Activated B cell treated with CpG ODN at 0.5 μM for 24 hours (primary cell): ENCODE measurements at regions of chr11 and their contacts with region 1.

Region 1: DNA sequence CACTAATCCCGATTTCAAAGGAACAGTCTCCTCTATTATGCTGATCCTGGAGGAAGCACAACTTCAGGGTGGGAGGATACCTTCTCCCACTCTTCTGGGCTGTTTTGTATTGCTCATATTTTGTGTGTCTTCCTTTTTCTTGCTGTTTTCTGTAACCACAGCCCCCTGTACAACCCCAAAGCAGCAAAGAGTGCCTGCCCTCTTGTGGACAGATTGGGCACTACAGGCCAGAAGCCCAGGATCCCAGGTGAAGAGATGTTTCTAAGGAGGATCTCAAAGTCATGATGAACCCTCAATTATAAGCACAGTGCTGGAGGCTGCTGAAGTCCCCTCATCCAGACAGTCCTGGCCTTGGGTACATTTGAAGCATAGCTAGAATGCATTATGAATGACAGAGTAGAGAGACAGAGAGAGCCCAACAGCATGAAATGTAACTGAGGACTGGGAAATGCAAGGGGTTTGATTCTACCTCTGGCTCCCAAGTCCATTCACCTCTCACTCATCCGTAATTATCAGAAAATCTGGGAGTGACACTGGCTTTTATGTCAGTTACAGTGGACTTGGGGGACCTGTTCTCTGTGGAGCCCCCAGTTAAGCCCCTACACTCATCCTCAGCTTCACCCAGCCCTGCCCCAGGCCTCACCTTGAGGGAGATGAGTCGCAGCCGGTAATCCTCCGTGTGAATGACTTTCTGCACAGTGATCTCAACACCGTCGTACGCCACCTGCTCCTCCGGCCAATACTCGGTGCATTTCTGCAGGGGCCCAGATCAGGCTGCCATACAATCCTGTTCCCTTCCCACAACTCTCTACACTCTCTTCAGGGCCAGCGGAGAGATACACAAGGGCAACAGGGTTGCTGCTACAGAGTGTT is 6.2 kb upstream of the IGSF22 start:
- DNase-seq: peak; percentile 56
- ATAC-seq: peak; percentile 82
- H3K4me3 Mint-ChIP-seq: no peak overlapping the region
- H3K27ac Mint-ChIP-seq: peak overlapping the region; percentile 10
- H3K4me1 Mint-ChIP-seq: peaks cover 15% of the 10 kb centered on the region
- H3K27me3 Mint-ChIP-seq: peaks cover 2% of the 10 kb centered on the region
- CTCF ChIP-seq: peak; percentile 71

Region 2: GRCh38 chr11:18115360-18116127 is 616.6 kb before region 1 on chr11:
- CTCF ChIA-PET with region 1: interaction called, 34 read pairs
- POLR2A ChIA-PET with region 1: no interaction called
- intact Hi-C with region 1: loop called (anchors 1 kb)
- DNase-seq: peak; percentile 36
- ATAC-seq: peak; percentile 93
- H3K4me3 Mint-ChIP-seq: no peak overlapping the region
- H3K27ac Mint-ChIP-seq: no peak overlapping the region
- H3K4me1 Mint-ChIP-seq: peaks cover 4% of the 10 kb centered on the region
- H3K27me3 Mint-ChIP-seq: peaks cover 14% of the 10 kb centered on the region
- CTCF ChIP-seq: peak; percentile 64

Region 3: GRCh38 chr11:18171377-18172000 is 560.7 kb before region 1 on chr11:
- CTCF ChIA-PET with region 1: no interaction called
- POLR2A ChIA-PET with region 1: no interaction called
- intact Hi-C with region 1: loop called (anchors 1 kb)
- DNase-seq: no peak
- ATAC-seq: no peak
- H3K4me3 Mint-ChIP-seq: no peak overlapping the region
- H3K27ac Mint-ChIP-seq: no peak overlapping the region
- H3K4me1 Mint-ChIP-seq: no peaks in the 10 kb centered on the region
- H3K27me3 Mint-ChIP-seq: peaks cover 17% of the 10 kb centered on the region
- CTCF ChIP-seq: no peak

Region 4: DNA sequence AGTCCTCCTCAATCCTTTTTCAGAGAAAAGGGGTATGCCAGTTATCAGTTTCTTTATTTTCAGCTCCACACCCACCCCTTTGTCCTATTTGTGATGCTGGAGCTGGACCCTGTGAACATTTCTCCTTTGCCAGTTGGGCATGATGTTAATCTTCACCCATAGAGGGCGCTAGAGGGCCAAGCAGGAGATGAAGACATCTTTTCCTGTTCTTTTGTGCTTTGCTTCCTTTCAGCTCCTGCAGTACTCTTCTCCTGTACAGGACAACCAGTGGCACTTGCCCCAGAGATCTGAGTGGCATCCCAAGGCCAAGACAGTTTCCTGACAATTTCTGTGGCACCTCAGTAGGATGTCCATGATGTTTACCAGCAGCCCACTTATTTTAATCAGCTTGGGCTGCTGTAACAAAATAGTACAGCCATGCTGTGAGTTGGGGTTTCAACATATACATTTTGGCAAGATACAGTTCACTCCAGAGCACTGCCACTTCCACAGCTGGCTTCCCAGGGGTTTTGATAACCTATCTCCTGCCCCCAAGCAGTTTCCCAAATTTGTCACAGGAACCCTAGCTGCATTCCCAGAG is 488.3 kb before region 1 on chr11:
- CTCF ChIA-PET with region 1: interaction called, 15 read pairs
- POLR2A ChIA-PET with region 1: no interaction called
- intact Hi-C with region 1: loop called (anchors 2 kb)
- DNase-seq: no peak
- ATAC-seq: no peak
- H3K4me3 Mint-ChIP-seq: no peak overlapping the region
- H3K27ac Mint-ChIP-seq: no peak overlapping the region
- H3K4me1 Mint-ChIP-seq: peaks cover 15% of the 10 kb centered on the region
- H3K27me3 Mint-ChIP-seq: peaks cover 16% of the 10 kb centered on the region
- CTCF ChIP-seq: no peak

Region 5: DNA sequence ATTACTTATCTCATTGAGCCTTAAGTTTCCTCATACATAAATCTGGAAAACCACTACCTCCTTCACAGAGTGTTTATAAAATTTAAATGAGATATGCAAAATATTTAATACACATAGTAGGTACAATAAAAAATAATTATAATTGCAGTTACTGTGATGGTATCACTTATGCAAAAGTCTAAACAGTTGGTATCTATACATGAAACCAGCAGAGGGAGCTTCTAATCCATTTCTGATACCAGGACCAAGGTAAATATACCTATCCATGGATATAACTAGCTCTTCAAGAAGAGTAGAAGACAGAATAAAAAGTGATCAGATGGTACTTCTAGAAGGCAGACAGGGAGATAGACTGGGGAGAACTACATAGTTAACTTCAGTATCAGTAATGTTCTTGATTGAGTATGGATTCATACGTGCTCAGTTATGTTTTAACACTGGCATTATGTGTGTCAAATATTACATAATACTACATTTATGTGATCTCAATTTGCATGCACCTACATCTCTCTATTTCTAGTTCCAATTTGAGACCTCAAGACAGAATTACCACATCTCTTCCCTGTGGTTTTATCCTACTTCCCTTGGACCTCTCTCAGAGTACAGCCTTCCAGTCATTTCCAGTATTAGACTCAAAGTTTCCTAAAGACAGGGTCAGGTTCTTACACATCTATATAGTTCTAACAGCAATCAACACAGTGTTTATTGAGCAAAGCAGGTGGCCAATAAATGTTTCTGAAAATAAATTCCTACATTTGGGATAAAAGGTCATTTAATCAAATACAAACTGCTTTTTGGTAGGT is 191.8 kb before region 1 on chr11:
- CTCF ChIA-PET with region 1: interaction called, 34 read pairs
- POLR2A ChIA-PET with region 1: no interaction called
- intact Hi-C with region 1: loop called (anchors 1 kb)
- DNase-seq: no peak
- ATAC-seq: peak; percentile 21
- H3K4me3 Mint-ChIP-seq: no peak overlapping the region
- H3K27ac Mint-ChIP-seq: no peak overlapping the region
- H3K4me1 Mint-ChIP-seq: no peaks in the 10 kb centered on the region
- H3K27me3 Mint-ChIP-seq: no peaks in the 10 kb centered on the region
- CTCF ChIP-seq: no peak

Region 6: DNA sequence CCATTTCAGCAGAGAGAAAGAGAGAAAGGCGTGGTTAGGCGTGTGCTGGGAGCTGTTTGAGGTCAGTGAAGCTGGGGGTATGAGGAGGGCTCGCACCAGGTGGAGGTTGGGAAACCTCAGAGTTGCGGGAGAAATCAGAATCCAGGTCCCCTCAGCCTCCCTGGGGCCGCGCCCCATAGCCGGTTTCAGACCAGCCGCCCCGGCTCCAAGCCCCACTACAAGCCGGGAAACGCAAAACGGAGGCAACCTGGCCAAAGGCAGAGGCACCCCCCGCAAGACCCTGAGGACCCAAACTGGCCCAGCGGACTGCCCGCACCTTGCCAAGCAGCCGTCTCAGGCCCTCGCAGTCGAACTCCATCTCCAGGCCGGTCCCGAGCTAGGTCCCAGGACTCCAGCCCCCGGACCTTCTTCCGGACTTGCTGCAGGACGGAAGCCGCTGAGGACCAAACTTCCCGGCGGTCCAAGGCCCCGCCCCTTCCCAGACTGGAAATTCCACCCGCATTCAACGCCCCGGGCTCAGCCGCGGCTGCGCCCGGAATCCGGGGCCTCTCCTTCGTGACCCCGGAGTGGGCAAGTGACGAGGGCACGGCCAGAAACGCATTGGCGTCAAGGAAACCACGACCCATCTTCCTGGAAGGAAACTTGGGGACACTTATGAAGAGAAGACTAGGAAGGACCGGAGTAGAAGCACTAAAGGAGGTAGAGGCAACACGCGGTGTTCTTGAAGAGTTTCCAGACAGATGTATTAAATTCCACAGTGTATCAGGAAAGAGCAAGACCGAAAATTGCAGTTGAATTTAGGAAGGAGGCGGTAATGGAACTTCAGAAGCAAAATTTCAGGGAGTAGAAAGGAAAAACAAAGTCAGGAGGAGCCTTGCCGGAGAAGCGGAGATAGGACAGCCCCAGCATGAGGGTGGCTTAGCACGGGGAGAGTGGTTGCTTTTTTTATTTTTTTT is 143.6 kb before region 1 on chr11 and contains the start of gene UEVLD:
- CTCF ChIA-PET with region 1: no interaction called
- POLR2A ChIA-PET with region 1: no interaction called
- intact Hi-C with region 1: loop called (anchors 2 kb)
- DNase-seq: peak; percentile 65
- ATAC-seq: peak; percentile 73
- H3K4me3 Mint-ChIP-seq: no peak within 1 kb of the TSS
- H3K27ac Mint-ChIP-seq: no peak within 1 kb of the TSS
- H3K4me1 Mint-ChIP-seq: no peaks in the 10 kb centered on the region
- H3K27me3 Mint-ChIP-seq: no peaks in the 10 kb centered on the region
- CTCF ChIP-seq: no peak
- total RNA-seq, gene UEVLD: 12.9 and 18.0 TPM in 2 replicates

Region 7: GRCh38 chr11:18706330-18707243 is 25.6 kb before region 1 on chr11:
- CTCF ChIA-PET with region 1: no interaction called
- POLR2A ChIA-PET with region 1: no interaction called
- intact Hi-C with region 1: no loop called
- DNase-seq: no peak
- ATAC-seq: peak; percentile 83
- H3K4me3 Mint-ChIP-seq: peak overlapping the region; percentile 88
- H3K27ac Mint-ChIP-seq: peak overlapping the region; percentile 77
- H3K4me1 Mint-ChIP-seq: peaks cover 21% of the 10 kb centered on the region
- H3K27me3 Mint-ChIP-seq: peaks cover 14% of the 10 kb centered on the region
- CTCF ChIP-seq: no peak

Region 8: GRCh38 chr11:18721561-18722292 is 10.5 kb before region 1 on chr11:
- CTCF ChIA-PET with region 1: interaction called, 31 read pairs
- POLR2A ChIA-PET with region 1: no interaction called
- intact Hi-C with region 1: no loop called
- DNase-seq: peak; percentile 45
- ATAC-seq: peak; percentile 56
- H3K4me3 Mint-ChIP-seq: peak overlapping the region; percentile 92
- H3K27ac Mint-ChIP-seq: peak overlapping the region; percentile 46
- H3K4me1 Mint-ChIP-seq: peaks cover 12% of the 10 kb centered on the region
- H3K27me3 Mint-ChIP-seq: no peaks in the 10 kb centered on the region
- CTCF ChIP-seq: peak; percentile 39